ENCODE measurements at regions of chr18 and their contacts with region 1.

Region 1: GRCh38 chr18:22032392-22032961 is 136.9 kb upstream of the GATA6 start:
- DNase-seq: peak; percentile 83 to 87
- H3K4me3 ChIP-seq: no peak overlapping the region
- H3K4me3 Mint-ChIP-seq: peak overlapping the region; percentile 57
- H3K27ac Mint-ChIP-seq: peak overlapping the region; percentile 95
- H3K4me1 ChIP-seq: peaks cover 44% of the 10 kb centered on the region
- H3K4me1 Mint-ChIP-seq: peaks cover 31% of the 10 kb centered on the region
- H3K27me3 ChIP-seq: no peaks in the 10 kb centered on the region; the same call in 1 of the 2 replicates
- H3K27me3 Mint-ChIP-seq: no peaks in the 10 kb centered on the region
- CTCF ChIP-seq: no peak

Region 2: GRCh38 chr18:22044474-22045220 is 12.2 kb after region 1 on chr18:
- CTCF ChIA-PET with region 1: no interaction called
- POLR2A ChIA-PET with region 1: interaction called, 10 read pairs
- intact Hi-C with region 1: loop called (anchors 1 kb)
- DNase-seq: peak; percentile 88 to 94
- H3K4me3 ChIP-seq: peak overlapping the region; percentile 22
- H3K4me3 Mint-ChIP-seq: peak overlapping the region; percentile 71
- H3K27ac Mint-ChIP-seq: peak overlapping the region; percentile 89
- H3K4me1 ChIP-seq: peaks cover 88% of the 10 kb centered on the region
- H3K4me1 Mint-ChIP-seq: peaks cover 79% of the 10 kb centered on the region
- H3K27me3 ChIP-seq: no peaks in the 10 kb centered on the region
- H3K27me3 Mint-ChIP-seq: no peaks in the 10 kb centered on the region
- CTCF ChIP-seq: no peak

Measured in Caco-2 (cell line).